ENCODE measurements at regions of chr1 and their contacts with region 1.

Region 1: GRCh38 chr1:20574686-20575540 is 14.0 kb upstream of the CDA start:
- DNase-seq: peak; percentile 80 to 88 (median 83)
- H3K4me3 ChIP-seq: no peak overlapping the region
- H3K4me3 Mint-ChIP-seq: peak overlapping the region in 1 of 2 donors; percentile 42
- H3K27ac ChIP-seq: no peak overlapping the region
- H3K27ac Mint-ChIP-seq: peak overlapping the region in 1 of 7 donors; percentile 59
- H3K4me1 ChIP-seq: peaks cover 17% of the 10 kb centered on the region in 2 donors
- H3K4me1 Mint-ChIP-seq: peaks cover 21% of the 10 kb centered on the region
- H3K27me3 ChIP-seq: peaks cover 5 to 7% of the 10 kb centered on the region in 2 donors
- H3K27me3 Mint-ChIP-seq: peaks cover 18 to 29% (median 22%) of the 10 kb centered on the region in 3 donors
- CTCF ChIP-seq: peak; percentile 83

Region 2: GRCh38 chr1:20521960-20522861 is 52.7 kb before region 1 on chr1:
- intact Hi-C with region 1: loop called in 1 of 2 experiments (anchors 10 kb)
- DNase-seq: peak; percentile 44 to 65 (median 59)
- H3K4me3 ChIP-seq: no peak overlapping the region
- H3K4me3 Mint-ChIP-seq: no peak overlapping the region
- H3K27ac ChIP-seq: no peak overlapping the region
- H3K27ac Mint-ChIP-seq: no peak overlapping the region
- H3K4me1 ChIP-seq: no peaks in the 10 kb centered on the region
- H3K4me1 Mint-ChIP-seq: peaks cover 6% of the 10 kb centered on the region
- H3K27me3 ChIP-seq: peaks cover 0 to 2% of the 10 kb centered on the region in 2 donors
- H3K27me3 Mint-ChIP-seq: peaks cover 10 to 32% (median 17%) of the 10 kb centered on the region in 3 donors
- CTCF ChIP-seq: peak; percentile 86

Region 3: GRCh38 chr1:20601129-20601825 is 26.4 kb after region 1 on chr1:
- intact Hi-C with region 1: no loop called
- DNase-seq: no peak
- H3K4me3 ChIP-seq: no peak overlapping the region
- H3K4me3 Mint-ChIP-seq: no peak overlapping the region
- H3K27ac ChIP-seq: peak overlapping the region in 1 of 2 donors; percentile 41
- H3K27ac Mint-ChIP-seq: peak overlapping the region; percentile 3 to 73 (median 33)
- H3K4me1 ChIP-seq: peaks cover 67 to 86% of the 10 kb centered on the region in 2 donors
- H3K4me1 Mint-ChIP-seq: peaks cover 80% of the 10 kb centered on the region
- H3K27me3 ChIP-seq: no peaks in the 10 kb centered on the region
- H3K27me3 Mint-ChIP-seq: no peaks in the 10 kb centered on the region
- CTCF ChIP-seq: no peak

Region 4: DNA sequence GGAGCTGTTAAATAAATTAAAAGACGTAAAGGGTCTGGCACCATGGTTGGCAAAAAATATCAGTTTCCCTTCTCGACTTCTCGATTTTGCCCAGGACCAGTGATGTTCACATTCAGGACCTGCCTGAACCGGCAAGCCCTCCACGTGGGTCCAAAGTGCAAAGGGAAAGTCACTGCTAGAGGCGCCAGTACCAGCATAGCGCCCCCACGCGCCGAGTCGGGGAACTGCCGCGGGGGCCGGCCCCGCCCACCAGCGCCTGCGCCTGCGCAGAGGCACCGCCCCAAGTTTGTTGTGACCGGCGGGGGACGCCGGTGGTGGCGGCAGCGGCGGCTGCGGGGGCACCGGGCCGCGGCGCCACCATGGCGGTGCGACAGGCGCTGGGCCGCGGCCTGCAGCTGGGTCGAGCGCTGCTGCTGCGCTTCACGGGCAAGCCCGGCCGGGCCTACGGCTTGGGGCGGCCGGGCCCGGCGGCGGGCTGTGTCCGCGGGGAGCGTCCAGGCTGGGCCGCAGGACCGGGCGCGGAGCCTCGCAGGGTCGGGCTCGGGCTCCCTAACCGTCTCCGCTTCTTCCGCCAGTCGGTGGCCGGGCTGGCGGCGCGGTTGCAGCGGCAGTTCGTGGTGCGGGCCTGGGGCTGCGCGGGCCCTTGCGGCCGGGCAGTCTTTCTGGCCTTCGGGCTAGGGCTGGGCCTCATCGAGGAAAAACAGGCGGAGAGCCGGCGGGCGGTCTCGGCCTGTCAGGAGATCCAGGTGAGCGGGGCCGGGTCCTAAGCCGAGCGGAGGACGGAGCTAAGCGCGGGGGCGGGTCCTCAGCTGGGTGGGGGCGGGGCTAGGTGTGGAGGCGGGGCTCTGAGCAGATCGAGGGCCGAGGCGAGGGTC is 58.5 kb after region 1 on chr1 and contains the start of gene PINK1:
- intact Hi-C with region 1: loop called in 1 of 2 experiments (anchors 5 kb)
- DNase-seq: peak; percentile 70 to 82 (median 79)
- H3K4me3 ChIP-seq: peak within 1 kb of the TSS; percentile 54 to 96 (median 92)
- H3K4me3 Mint-ChIP-seq: peak within 1 kb of the TSS; percentile 80 to 89
- H3K27ac ChIP-seq: peak within 1 kb of the TSS; percentile 21 to 81
- H3K27ac Mint-ChIP-seq: peak within 1 kb of the TSS; percentile 19 to 87 (median 81)
- H3K4me1 ChIP-seq: peaks cover 15 to 16% of the 10 kb centered on the region in 2 donors
- H3K4me1 Mint-ChIP-seq: peaks cover 19% of the 10 kb centered on the region
- H3K27me3 ChIP-seq: no peaks in the 10 kb centered on the region
- H3K27me3 Mint-ChIP-seq: peaks cover 0 to 2% (median 1%) of the 10 kb centered on the region in 3 donors
- CTCF ChIP-seq: peak; percentile 99
- polyA plus RNA-seq, gene PINK1: 21.6 to 32.7 (median 24.0) TPM

Region 5: DNA sequence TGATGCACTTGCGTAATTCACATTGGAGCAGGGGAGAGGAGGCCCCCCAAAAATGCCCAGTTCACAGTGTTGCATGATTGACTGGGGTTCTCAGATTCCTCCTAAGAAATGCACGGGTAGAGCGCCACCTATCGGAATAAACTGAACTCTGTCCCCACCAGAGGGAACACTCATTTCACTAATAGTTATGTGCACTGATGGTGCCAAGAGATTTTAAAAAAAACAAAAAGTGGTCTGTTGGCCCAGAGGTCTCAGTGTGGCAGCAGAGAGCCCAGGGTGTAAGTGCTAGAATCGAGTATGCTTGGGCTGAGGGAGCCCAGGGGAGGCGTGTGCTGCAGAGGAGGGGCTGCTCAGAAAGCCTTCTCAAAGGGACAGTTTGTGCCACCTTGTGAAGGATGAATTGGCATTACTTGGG is 65.3 kb after region 1 on chr1:
- intact Hi-C with region 1: loop called (anchors 1 to 2 kb)
- DNase-seq: peak; percentile 47 to 64 (median 62)
- H3K4me3 ChIP-seq: no peak overlapping the region
- H3K4me3 Mint-ChIP-seq: no peak overlapping the region
- H3K27ac ChIP-seq: no peak overlapping the region
- H3K27ac Mint-ChIP-seq: peak overlapping the region in 1 of 7 donors; percentile 85
- H3K4me1 ChIP-seq: no peaks in the 10 kb centered on the region
- H3K4me1 Mint-ChIP-seq: peaks cover 5% of the 10 kb centered on the region
- H3K27me3 ChIP-seq: no peaks in the 10 kb centered on the region
- H3K27me3 Mint-ChIP-seq: peaks cover 0 to 3% (median 1%) of the 10 kb centered on the region in 3 donors
- CTCF ChIP-seq: peak; percentile 86

Region 6: DNA sequence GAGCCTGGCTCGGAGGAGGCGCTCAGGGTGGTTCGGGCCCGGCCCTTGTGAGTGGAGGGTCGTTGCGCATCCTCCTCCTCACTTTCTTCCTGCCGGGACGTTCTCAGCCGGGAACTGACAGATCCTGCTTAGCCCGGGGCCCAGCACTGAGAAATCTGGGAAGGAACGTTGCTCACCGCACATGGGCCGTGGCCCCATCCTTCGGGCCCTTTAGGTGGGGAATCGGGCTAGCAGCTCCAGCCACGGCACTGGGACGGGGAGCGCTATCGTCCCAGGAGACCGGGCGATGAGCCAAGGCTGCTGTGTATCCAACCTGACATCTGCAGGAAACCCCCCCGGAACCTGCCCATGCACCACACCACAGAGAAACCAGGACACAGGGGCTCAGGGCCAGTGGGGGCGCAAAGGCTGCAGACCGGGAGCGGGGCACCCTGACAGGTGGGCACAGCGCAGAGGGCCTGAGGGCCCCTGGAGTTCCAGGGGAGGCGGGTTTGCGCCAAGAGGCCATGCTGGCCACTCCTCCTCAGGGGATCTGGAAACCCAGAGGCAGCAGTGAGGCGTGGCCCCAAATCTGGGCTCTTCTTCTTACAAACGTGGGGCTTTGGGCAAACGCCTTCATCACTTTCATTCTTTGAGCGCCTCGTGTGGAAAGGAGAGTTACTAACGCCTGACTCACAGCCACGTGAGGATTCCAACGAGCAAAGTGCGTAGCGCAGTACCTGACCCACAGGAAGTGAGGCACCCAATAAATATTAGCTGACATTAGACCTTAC is 157.9 kb after region 1 on chr1 and contains the start of gene SH2D5:
- intact Hi-C with region 1: loop called in 1 of 2 experiments (anchors 10 kb)
- DNase-seq: peak; percentile 91 to 97 (median 92)
- H3K4me3 ChIP-seq: peak within 1 kb of the TSS; percentile 40 to 77 (median 52)
- H3K4me3 Mint-ChIP-seq: peak within 1 kb of the TSS; percentile 82 to 96
- H3K27ac ChIP-seq: peak within 1 kb of the TSS in 1 of 2 donors; percentile 4
- H3K27ac Mint-ChIP-seq: peak within 1 kb of the TSS; percentile 33 to 89 (median 76)
- H3K4me1 ChIP-seq: peaks cover 19 to 25% of the 10 kb centered on the region in 2 donors
- H3K4me1 Mint-ChIP-seq: peaks cover 23% of the 10 kb centered on the region
- H3K27me3 ChIP-seq: peaks cover 26 to 55% of the 10 kb centered on the region in 2 donors
- H3K27me3 Mint-ChIP-seq: peaks cover 48 to 61% (median 57%) of the 10 kb centered on the region in 3 donors
- CTCF ChIP-seq: peak; percentile 33
- polyA plus RNA-seq, gene SH2D5: not detected